Activated CD4-positive, alpha-beta T cell treated with anti-CD3 and anti-CD28 coated beads, Interleukin-2, amount 10 ng/mL, durations not matched to agents 24 days and 14 days (primary cell): ENCODE measurements at regions of chr10 and their contacts with region 1.

Region 1: DNA sequence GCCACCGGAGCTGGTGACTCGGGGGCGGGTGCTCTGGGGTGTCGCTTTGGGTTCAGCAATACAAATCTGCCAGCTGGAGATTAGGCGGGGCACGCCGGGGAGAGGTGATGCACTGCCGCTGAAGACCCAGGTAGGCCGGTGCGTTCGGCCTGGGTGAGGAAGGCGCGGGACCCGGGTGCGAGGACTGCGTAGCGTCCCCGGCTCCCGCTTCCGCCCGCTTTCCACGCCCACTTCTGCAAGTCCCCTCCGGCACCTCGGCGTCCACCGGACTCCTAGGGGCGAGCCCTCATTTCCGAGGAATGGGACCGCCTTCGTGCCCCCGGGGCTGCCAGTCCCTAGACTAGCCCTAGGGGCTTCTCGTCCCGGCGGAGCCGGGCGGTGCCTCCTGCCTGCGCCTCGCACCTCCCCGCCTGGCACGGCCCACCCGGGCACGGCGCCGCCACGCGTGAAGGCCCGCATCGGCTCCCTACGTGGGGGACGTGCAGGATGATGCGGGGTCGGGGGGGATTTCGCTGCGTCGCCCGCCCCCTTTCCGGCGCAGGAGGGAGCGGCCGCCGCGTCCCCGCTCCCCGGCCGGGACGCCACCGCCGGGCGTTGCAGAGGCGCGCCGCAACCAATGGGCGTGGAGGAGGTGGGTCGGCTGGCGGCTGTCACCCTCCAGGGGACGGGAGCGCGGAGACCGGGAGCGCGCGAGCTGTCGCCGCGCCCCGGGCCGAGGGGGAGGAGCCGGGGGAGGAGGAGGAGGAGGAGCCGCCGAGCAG is 40.0 kb downstream of the HK1 start:
- DNase-seq: peak; percentile 98
- H3K4me3 Mint-ChIP-seq: peak overlapping the region; percentile 98
- H3K27ac Mint-ChIP-seq: peak overlapping the region; percentile 98
- H3K4me1 Mint-ChIP-seq: peaks cover 30% of the 10 kb centered on the region
- H3K27me3 Mint-ChIP-seq: no peaks in the 10 kb centered on the region

Region 2: DNA sequence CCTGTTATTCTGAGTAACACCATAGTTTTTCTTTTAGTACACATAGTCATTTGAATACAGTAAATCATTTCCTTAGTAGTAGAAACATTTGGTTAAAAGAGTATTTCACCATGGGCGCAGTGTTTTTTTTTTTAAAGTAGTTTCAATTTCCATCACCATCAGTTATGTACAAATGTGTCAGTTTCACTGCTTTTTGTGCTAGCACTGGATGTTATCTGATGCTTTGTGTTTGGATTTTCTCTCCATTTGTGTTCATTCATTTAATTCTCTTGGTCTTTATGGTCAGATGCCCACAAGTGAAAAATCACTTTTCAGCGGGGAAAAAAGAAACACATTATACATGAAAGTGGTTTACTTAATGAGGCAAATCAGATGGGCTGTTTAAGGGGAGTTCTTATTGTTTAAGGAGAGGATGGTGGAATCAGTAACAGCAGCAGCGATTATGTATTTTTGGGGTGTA is 56.0 kb before region 1 on chr10:
- intact Hi-C with region 1: loop called (anchors 1 kb)
- DNase-seq: no peak
- H3K4me3 Mint-ChIP-seq: no peak overlapping the region
- H3K27ac Mint-ChIP-seq: peak overlapping the region; percentile 52
- H3K4me1 Mint-ChIP-seq: peaks cover 14% of the 10 kb centered on the region
- H3K27me3 Mint-ChIP-seq: peaks cover 6% of the 10 kb centered on the region

Region 3: GRCh38 chr10:69344591-69345252 is 26.4 kb after region 1 on chr10:
- intact Hi-C with region 1: loop called (anchors 2 kb)
- DNase-seq: peak; percentile 77
- H3K4me3 Mint-ChIP-seq: peak overlapping the region; percentile 70
- H3K27ac Mint-ChIP-seq: peak overlapping the region; percentile 86
- H3K4me1 Mint-ChIP-seq: peaks cover 69% of the 10 kb centered on the region
- H3K27me3 Mint-ChIP-seq: no peaks in the 10 kb centered on the region

Region 4: DNA sequence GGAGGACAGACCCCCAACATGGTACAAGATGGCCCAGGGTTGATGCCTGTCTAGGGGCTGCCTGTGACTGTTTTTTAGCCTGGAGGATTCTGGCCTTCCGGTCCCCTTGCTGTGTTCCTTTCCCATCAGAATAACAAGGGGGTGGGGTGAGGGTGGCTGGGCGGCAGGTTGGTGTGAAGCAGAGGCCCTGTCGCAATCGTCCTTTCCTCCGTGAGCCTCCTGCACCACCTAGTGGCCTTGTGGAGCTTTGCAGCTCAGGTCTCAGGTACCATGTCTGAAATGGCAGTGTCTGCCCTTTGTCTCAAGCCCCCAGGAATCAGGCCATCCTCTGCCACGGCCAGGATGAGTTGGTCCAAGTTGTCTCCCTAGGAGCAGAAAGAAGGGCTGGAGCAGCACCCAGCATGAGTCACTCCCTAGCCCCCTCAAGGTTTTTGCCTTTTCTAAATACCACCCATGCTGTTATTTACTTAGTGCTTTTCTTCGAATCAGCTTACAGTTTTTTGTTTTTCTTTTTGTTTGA is 74.3 kb after region 1 on chr10:
- intact Hi-C with region 1: loop called (anchors 2 kb)
- DNase-seq: peak; percentile 95
- H3K4me3 Mint-ChIP-seq: no peak overlapping the region
- H3K27ac Mint-ChIP-seq: peak overlapping the region; percentile 67
- H3K4me1 Mint-ChIP-seq: peaks cover 27% of the 10 kb centered on the region
- H3K27me3 Mint-ChIP-seq: no peaks in the 10 kb centered on the region